Gastrocnemius medialis (tissue), 4 donors: ENCODE measurements at regions of chr5 and their contacts with region 1.

Region 1: DNA sequence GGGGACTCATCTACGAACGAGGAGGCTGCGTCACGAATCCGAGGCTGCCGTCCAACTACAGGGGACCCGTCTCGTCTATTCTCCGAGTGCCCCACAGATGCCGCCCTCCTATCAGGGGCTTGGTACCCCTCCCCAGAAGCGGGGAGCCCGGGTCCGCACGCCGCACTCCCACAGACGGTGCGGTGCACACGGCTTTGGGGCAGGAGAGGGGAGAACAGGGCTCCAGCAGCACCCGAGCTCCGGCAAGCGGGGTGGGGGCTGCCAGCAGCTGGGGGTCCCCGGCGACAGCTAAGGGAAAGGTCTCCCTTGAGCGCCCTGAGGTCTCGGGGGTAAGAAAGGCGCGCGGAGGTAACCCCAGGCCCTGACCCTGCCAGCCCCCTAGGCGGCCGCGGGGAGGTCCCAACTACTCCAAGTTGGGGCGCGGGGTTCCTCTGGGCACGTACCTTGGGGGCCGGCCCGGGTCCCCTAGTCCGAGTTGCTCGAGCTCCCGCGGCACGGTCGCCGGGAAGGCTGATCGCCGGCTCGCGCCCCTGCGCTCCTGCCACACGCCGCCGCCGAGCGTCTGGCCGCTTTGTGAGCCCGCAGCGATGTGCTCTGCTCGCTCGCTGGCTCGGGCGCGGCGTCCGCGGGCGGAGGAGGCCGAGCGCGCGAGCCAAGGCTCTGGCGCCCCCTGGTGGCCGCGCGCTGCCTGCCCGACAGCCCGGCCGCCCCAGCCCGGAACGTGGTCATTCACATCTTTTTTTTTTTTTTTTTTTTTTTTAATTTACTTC is at the start of gene SPOCK1:
- DNase-seq: peak in 1 of 2 donors; percentile 54
- ATAC-seq: peak; percentile 84 to 88
- H3K4me3 ChIP-seq: peak within 1 kb of the TSS; percentile 49 to 69 (median 62)
- H3K27ac ChIP-seq: peak within 1 kb of the TSS in 2 of 4 donors; percentile 57 to 75
- H3K4me1 ChIP-seq: no peaks in the 10 kb centered on the region
- H3K27me3 ChIP-seq: no peaks in the 10 kb centered on the region
- CTCF ChIP-seq: peak in 4 of 5 experiments; percentile 85 to 93 (median 89)
- POLR2A ChIP-seq: peak; percentile 65 to 83
- total RNA-seq, gene SPOCK1: 5.8 to 33.8 (median 25.3) TPM

Region 2: GRCh38 chr5:136802383-136802782 is 696.5 kb before region 1 on chr5:
- in situ Hi-C with region 1: loop called in 2 of 4 experiments (anchors 5 to 25 kb)
- intact Hi-C with region 1: loop called (anchors 2 kb)
- DNase-seq: peak in 1 of 2 donors; percentile 14
- ATAC-seq: peak in 1 of 2 donors; percentile 52
- H3K4me3 ChIP-seq: no peak overlapping the region
- H3K27ac ChIP-seq: no peak overlapping the region
- H3K4me1 ChIP-seq: no peaks in the 10 kb centered on the region
- H3K27me3 ChIP-seq: no peaks in the 10 kb centered on the region
- CTCF ChIP-seq: peak in 3 of 5 experiments; percentile 15 to 46 (median 37)
- POLR2A ChIP-seq: no peak

Region 3: DNA sequence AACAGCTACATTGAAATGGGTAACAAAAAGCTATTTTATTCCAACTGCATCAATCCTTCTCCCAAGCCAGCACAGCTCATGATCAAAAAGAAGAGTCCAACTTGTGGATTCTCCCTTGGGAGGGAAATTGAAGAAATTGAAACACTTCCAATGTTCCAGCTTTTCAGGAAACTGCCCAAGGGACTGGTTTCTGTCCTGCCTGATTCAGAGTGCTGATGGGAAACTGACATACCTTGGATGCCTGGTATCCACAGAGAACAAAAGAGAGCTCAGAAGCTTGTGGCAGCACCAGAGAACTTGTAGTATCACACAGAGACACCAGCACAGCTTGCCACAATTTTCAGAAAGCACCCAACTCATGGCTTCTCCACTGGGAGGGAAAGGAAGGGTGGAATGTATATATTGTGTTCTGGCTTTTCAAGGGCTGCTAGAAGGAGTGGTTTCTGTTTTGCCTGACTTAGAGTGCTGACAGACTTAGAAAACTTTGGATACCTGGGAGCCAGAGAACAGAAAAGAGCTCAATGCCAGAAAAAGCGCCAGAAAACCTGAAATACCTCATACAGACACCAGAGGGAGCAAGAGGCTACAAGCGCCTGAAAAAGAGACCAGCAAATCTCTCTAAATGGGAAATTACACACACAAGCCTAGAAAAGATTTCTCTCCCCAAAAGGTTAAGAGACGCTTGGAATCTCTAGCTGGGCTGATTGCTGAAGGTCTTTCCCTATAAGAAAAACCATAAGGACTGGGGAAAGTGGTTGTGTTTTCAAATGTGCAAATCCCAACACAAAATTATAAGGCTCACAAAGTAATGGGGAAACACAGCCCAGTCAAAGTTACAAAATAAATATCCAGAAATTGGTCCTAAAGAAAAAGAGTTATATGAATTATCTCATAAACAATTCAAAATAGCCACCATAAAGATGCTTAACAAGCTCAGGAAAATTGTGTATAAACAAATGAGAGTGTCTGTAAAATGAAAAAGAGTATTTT is 178.6 kb before region 1 on chr5:
- in situ Hi-C with region 1: loop called in 2 of 4 experiments (anchors 5 kb)
- intact Hi-C with region 1: loop called (anchors 1 kb)
- DNase-seq: peak; percentile 16 to 32
- ATAC-seq: peak in 1 of 2 donors; percentile 20
- H3K4me3 ChIP-seq: no peak overlapping the region
- H3K27ac ChIP-seq: no peak overlapping the region
- H3K4me1 ChIP-seq: peaks cover 9 to 20% of the 10 kb centered on the region in 2 donors
- H3K27me3 ChIP-seq: no peaks in the 10 kb centered on the region
- CTCF ChIP-seq: peak; percentile 67 to 87 (median 84)
- POLR2A ChIP-seq: no peak

Region 4: DNA sequence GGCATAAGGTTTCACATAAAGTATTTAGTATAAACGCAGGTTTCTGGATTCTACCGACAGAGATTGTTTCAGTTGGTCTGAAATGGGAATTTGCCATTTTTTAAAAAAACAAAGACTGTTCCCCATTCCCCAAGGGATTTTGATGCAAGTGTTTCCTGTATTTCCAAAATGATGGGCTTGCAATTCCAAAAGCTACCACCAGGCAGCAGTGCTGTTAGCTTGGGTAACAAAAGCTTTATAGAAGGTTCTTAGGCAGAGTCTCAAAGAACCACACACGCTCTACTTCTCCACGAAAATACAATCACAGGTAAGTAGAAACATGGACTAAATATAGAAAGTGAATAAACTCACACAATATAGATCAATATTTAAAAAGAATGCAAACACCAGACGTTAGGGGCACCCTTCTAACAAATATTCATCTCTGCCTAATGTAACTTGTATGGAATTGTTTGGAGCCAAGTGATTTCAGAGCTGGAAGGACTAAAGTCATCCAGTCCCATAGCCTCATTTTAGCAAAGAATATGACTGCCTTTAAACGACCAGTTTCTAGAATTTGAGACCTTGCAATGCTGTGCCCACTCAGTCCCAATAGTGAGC is 154.1 kb before region 1 on chr5:
- in situ Hi-C with region 1: loop called in 1 of 4 experiments (anchors 10 kb)
- intact Hi-C with region 1: loop called (anchors 1 kb)
- DNase-seq: peak in 1 of 2 donors; percentile 44
- ATAC-seq: peak in 1 of 2 donors; percentile 61
- H3K4me3 ChIP-seq: no peak overlapping the region
- H3K27ac ChIP-seq: no peak overlapping the region
- H3K4me1 ChIP-seq: no peaks in the 10 kb centered on the region
- H3K27me3 ChIP-seq: no peaks in the 10 kb centered on the region
- CTCF ChIP-seq: peak; percentile 64 to 74 (median 73)
- POLR2A ChIP-seq: no peak

Region 5: DNA sequence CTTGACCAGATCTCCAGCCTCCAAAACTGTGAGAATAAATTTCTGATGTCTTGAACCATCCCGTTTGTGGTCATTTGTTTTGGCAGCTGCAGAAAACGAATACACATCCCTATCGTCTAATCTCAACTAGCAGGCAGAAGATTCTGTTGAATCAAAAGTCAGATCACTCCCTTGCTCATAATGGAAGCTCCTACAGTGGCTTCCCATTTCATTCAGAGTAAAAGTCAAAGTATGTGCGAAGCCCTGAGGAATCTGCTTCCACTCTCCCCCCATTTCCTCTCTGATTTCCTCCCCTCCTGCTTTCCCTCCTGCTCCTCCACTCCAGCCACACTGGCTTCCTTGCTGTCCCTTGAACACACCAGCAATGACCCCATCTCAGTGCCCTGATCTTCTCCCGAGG is 35.0 kb after region 1 on chr5:
- in situ Hi-C with region 1: no loop called
- intact Hi-C with region 1: no loop called
- DNase-seq: no peak
- ATAC-seq: no peak
- H3K4me3 ChIP-seq: no peak overlapping the region
- H3K27ac ChIP-seq: no peak overlapping the region
- H3K4me1 ChIP-seq: no peaks in the 10 kb centered on the region
- H3K27me3 ChIP-seq: peaks cover 0 to 2% (median 0%) of the 10 kb centered on the region in 3 donors
- CTCF ChIP-seq: no peak
- POLR2A ChIP-seq: no peak

Region 6: GRCh38 chr5:137754126-137754960 is 255.4 kb after region 1 on chr5 and contains the start of gene HNRNPA0:
- in situ Hi-C with region 1: no loop called
- intact Hi-C with region 1: loop called (anchors 5 kb)
- DNase-seq: peak; percentile 96 to 97
- ATAC-seq: peak; percentile 92 to 95
- H3K4me3 ChIP-seq: peak within 1 kb of the TSS; percentile 80 to 98 (median 96)
- H3K27ac ChIP-seq: peak within 1 kb of the TSS; percentile 98 to 100 (median 100)
- H3K4me1 ChIP-seq: peaks cover 28 to 31% of the 10 kb centered on the region in 2 donors
- H3K27me3 ChIP-seq: no peaks in the 10 kb centered on the region
- CTCF ChIP-seq: peak in 2 of 5 experiments; percentile 19 to 26
- POLR2A ChIP-seq: peak; percentile 96 to 99
- total RNA-seq, gene HNRNPA0: 4.2 to 6.0 (median 5.2) TPM